CD4-positive, alpha-beta memory T cell (primary cell): ENCODE measurements at regions of chr5 and their contacts with region 1.

Region 1: GRCh38 chr5:168679515-168679920 is 100.3 kb upstream of the PANK3 start:
- DNase-seq: peak in 4 of 5 donors; percentile 25 to 36 (median 32)
- H3K4me3 ChIP-seq: no peak overlapping the region
- H3K4me3 Mint-ChIP-seq: no peak overlapping the region
- H3K27ac ChIP-seq: no peak overlapping the region
- H3K27ac Mint-ChIP-seq: no peak overlapping the region
- H3K4me1 ChIP-seq: peaks cover 8% of the 10 kb centered on the region
- H3K4me1 Mint-ChIP-seq: peaks cover 3 to 10% (median 6%) of the 10 kb centered on the region in 4 donors
- H3K27me3 ChIP-seq: no peaks in the 10 kb centered on the region
- H3K27me3 Mint-ChIP-seq: peaks cover 0 to 2% of the 10 kb centered on the region in 2 donors

Region 2: DNA sequence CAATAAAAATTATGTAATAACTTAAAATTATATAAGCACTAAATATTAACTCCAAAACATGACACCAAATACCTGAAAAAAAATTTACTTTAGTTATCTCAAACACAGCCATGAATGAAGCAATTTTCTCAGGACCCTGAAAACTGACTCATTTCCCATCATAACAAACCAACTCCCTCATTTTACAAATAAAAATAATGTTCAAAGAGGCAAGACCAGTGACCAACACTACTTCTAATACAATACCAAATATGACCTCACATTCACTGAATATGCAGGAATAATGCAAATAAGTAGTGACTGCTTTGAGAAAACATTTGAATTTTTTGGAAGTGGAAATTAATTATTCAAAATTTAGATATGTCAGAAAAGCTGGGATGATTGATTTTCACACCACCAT is 128.9 kb before region 1 on chr5:
- CTCF ChIA-PET with region 1: no interaction called
- POLR2A ChIA-PET with region 1: no interaction called
- intact Hi-C with region 1: no loop called
- DNase-seq: no peak
- H3K4me3 ChIP-seq: no peak overlapping the region
- H3K4me3 Mint-ChIP-seq: no peak overlapping the region
- H3K27ac ChIP-seq: no peak overlapping the region
- H3K27ac Mint-ChIP-seq: no peak overlapping the region
- H3K4me1 ChIP-seq: no peaks in the 10 kb centered on the region
- H3K4me1 Mint-ChIP-seq: peaks cover 0 to 7% (median 1%) of the 10 kb centered on the region in 4 donors
- H3K27me3 ChIP-seq: no peaks in the 10 kb centered on the region
- H3K27me3 Mint-ChIP-seq: no peaks in the 10 kb centered on the region

Region 3: DNA sequence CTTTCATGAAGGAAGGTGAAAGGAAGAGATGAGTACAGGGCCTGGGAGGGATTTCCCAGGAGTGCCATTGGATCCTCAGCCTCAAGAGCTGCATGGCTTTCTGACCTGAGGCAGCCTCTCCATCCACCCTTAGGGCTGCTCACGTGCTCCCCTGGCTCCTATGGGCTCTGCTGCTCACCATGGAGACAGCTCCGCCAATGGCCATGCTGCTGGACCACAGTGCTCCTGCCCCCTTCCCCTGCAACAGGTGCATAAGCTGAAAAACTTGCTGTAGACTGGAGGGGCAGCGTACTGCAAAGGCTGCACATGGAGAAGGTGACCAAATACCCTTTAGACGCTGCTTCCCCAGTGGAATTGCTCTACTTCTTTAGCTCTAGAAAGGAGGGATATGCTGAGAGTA is 12.4 kb after region 1 on chr5:
- CTCF ChIA-PET with region 1: interaction called, 22 read pairs
- POLR2A ChIA-PET with region 1: no interaction called
- intact Hi-C with region 1: no loop called
- DNase-seq: no peak
- H3K4me3 ChIP-seq: no peak overlapping the region
- H3K4me3 Mint-ChIP-seq: no peak overlapping the region
- H3K27ac ChIP-seq: no peak overlapping the region
- H3K27ac Mint-ChIP-seq: no peak overlapping the region
- H3K4me1 ChIP-seq: no peaks in the 10 kb centered on the region
- H3K4me1 Mint-ChIP-seq: no peaks in the 10 kb centered on the region
- H3K27me3 ChIP-seq: no peaks in the 10 kb centered on the region
- H3K27me3 Mint-ChIP-seq: peaks cover 0 to 4% of the 10 kb centered on the region in 2 donors

Region 4: GRCh38 chr5:168987543-168988300 is 308.2 kb after region 1 on chr5:
- CTCF ChIA-PET with region 1: interaction called, 7 read pairs
- POLR2A ChIA-PET with region 1: no interaction called
- intact Hi-C with region 1: loop called (anchors 1 kb)
- DNase-seq: peak in 4 of 5 donors; percentile 18 to 43 (median 26)
- H3K4me3 ChIP-seq: no peak overlapping the region
- H3K4me3 Mint-ChIP-seq: no peak overlapping the region
- H3K27ac ChIP-seq: no peak overlapping the region
- H3K27ac Mint-ChIP-seq: no peak overlapping the region
- H3K4me1 ChIP-seq: no peaks in the 10 kb centered on the region
- H3K4me1 Mint-ChIP-seq: peaks cover 0 to 4% (median under 1%) of the 10 kb centered on the region in 4 donors
- H3K27me3 ChIP-seq: no peaks in the 10 kb centered on the region
- H3K27me3 Mint-ChIP-seq: peaks cover 3 to 15% of the 10 kb centered on the region in 2 donors